B cell (primary cell): ENCODE measurements at regions of chr16 and their contacts with region 1.

Region 1: GRCh38 chr16:29926005-29926710 is at the start of gene KCTD13:
- DNase-seq: peak; percentile 94
- ATAC-seq: peak; percentile 91
- H3K4me3 ChIP-seq: peak within 1 kb of the TSS; percentile 48 to 95 (median 84)
- H3K4me3 Mint-ChIP-seq: peak within 1 kb of the TSS; percentile 91
- H3K27ac ChIP-seq: peak within 1 kb of the TSS; percentile 80 to 84
- H3K27ac Mint-ChIP-seq: peak within 1 kb of the TSS; percentile 96
- H3K4me1 ChIP-seq: peaks cover 14 to 21% of the 10 kb centered on the region in 2 donors
- H3K4me1 Mint-ChIP-seq: peaks cover 25% of the 10 kb centered on the region
- H3K27me3 ChIP-seq: no peaks in the 10 kb centered on the region
- H3K27me3 Mint-ChIP-seq: no peaks in the 10 kb centered on the region
- CTCF ChIP-seq: no peak
- total RNA-seq, gene KCTD13: 74.3 and 83.9 TPM in 2 replicates

Region 2: GRCh38 chr16:29805378-29806098 is 120.6 kb before region 1 on chr16:
- CTCF ChIA-PET with region 1: no interaction called
- POLR2A ChIA-PET with region 1: interaction called, 7 read pairs
- intact Hi-C with region 1: loop called (anchors 2 kb)
- DNase-seq: peak; percentile 99
- ATAC-seq: peak; percentile 69
- H3K4me3 ChIP-seq: peak overlapping the region; percentile 63 to 95 (median 89)
- H3K4me3 Mint-ChIP-seq: peak overlapping the region; percentile 98
- H3K27ac ChIP-seq: peak overlapping the region; percentile 87 to 91
- H3K27ac Mint-ChIP-seq: peak overlapping the region; percentile 100
- H3K4me1 ChIP-seq: peaks cover 43 to 48% of the 10 kb centered on the region in 2 donors
- H3K4me1 Mint-ChIP-seq: peaks cover 44% of the 10 kb centered on the region
- H3K27me3 ChIP-seq: no peaks in the 10 kb centered on the region
- H3K27me3 Mint-ChIP-seq: no peaks in the 10 kb centered on the region
- CTCF ChIP-seq: peak; percentile 13

Region 3: GRCh38 chr16:29961479-29962343 is 35.6 kb after region 1 on chr16 and contains the start of gene TMEM219:
- CTCF ChIA-PET with region 1: interaction called, 9 read pairs
- POLR2A ChIA-PET with region 1: interaction called, 11 read pairs
- intact Hi-C with region 1: loop called (anchors 1 kb)
- DNase-seq: peak; percentile 97
- ATAC-seq: peak; percentile 92
- H3K4me3 ChIP-seq: peak within 1 kb of the TSS; percentile 76 to 86 (median 84)
- H3K4me3 Mint-ChIP-seq: peak within 1 kb of the TSS; percentile 90
- H3K27ac ChIP-seq: peak within 1 kb of the TSS; percentile 79 to 88
- H3K27ac Mint-ChIP-seq: peak within 1 kb of the TSS; percentile 91
- H3K4me1 ChIP-seq: peaks cover 13 to 19% of the 10 kb centered on the region in 2 donors
- H3K4me1 Mint-ChIP-seq: peaks cover 20% of the 10 kb centered on the region
- H3K27me3 ChIP-seq: no peaks in the 10 kb centered on the region
- H3K27me3 Mint-ChIP-seq: no peaks in the 10 kb centered on the region
- CTCF ChIP-seq: peak; percentile 65
- total RNA-seq, gene TMEM219: 56.3 and 66.6 TPM in 2 replicates

Region 4: GRCh38 chr16:29995911-29996772 is 70.0 kb after region 1 on chr16 and contains the start of gene INO80E:
- CTCF ChIA-PET with region 1: no interaction called
- POLR2A ChIA-PET with region 1: no interaction called
- intact Hi-C with region 1: loop called (anchors 1 kb)
- DNase-seq: peak; percentile 97
- ATAC-seq: peak; percentile 96
- H3K4me3 ChIP-seq: peak within 1 kb of the TSS; percentile 89 to 100 (median 98)
- H3K4me3 Mint-ChIP-seq: peak within 1 kb of the TSS; percentile 98
- H3K27ac ChIP-seq: peak within 1 kb of the TSS; percentile 94 to 97
- H3K27ac Mint-ChIP-seq: peak within 1 kb of the TSS; percentile 94
- H3K4me1 ChIP-seq: peaks cover 15 to 22% of the 10 kb centered on the region in 2 donors
- H3K4me1 Mint-ChIP-seq: peaks cover 43% of the 10 kb centered on the region
- H3K27me3 ChIP-seq: no peaks in the 10 kb centered on the region
- H3K27me3 Mint-ChIP-seq: no peaks in the 10 kb centered on the region
- CTCF ChIP-seq: no peak
- total RNA-seq, gene INO80E: 113 and 119 TPM in 2 replicates

Region 5: DNA sequence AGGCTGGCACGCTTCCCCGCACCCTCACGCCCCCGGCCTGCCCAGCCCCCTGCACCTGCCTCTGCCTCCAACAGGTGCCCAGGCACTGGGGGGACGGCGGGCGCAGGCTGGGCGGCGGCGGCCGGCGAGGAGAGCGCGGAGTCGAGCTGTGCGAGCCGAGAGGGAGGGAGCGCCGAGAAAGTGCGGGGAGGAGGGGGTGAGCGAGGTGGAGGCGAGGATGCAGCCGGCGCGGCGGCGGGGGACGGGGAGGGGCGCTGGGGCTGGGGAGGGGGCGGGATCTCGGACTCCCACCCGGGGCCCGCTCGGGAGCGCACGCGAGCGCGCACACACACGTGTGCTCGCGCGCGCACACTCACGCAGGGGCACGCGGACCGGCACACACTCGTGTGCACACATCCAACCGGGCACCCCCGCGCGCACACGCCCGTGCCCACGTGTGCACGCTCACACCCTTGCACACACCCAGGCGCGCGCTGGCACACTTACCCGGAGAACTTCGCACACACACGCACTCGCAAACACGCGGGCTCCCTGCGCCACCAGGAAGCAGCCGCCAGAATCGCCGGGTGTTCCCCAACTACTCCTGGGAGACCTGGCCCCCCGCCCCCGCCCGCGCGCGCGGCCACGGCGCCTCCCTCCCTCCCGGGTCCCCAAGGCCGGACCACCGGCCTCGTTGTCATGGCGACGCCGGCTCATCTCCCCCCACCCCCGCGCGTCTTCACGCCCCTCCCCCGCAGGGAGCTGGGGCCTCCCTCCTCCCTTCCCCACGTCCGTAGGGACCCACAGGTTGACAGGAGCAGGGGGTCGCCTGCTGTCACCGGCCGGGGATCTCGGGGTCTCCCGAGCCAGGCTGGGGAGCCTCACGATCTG is 84.9 kb after region 1 on chr16 and contains the start of gene DOC2A:
- CTCF ChIA-PET with region 1: no interaction called
- POLR2A ChIA-PET with region 1: interaction called, 11 read pairs
- intact Hi-C with region 1: no loop called
- DNase-seq: peak; percentile 49
- ATAC-seq: peak; percentile 32
- H3K4me3 ChIP-seq: peak within 1 kb of the TSS in 4 of 5 experiments; percentile 29 to 50 (median 44)
- H3K4me3 Mint-ChIP-seq: peak within 1 kb of the TSS; percentile 86
- H3K27ac ChIP-seq: no peak within 1 kb of the TSS
- H3K27ac Mint-ChIP-seq: no peak within 1 kb of the TSS
- H3K4me1 ChIP-seq: peaks cover 16 to 21% of the 10 kb centered on the region in 2 donors
- H3K4me1 Mint-ChIP-seq: peaks cover 14% of the 10 kb centered on the region
- H3K27me3 ChIP-seq: peaks cover 0 to 29% (median 15%) of the 10 kb centered on the region in 4 experiments
- H3K27me3 Mint-ChIP-seq: peaks cover 20% of the 10 kb centered on the region
- CTCF ChIP-seq: no peak
- total RNA-seq, gene DOC2A: not detected in 2 replicates

Region 6: DNA sequence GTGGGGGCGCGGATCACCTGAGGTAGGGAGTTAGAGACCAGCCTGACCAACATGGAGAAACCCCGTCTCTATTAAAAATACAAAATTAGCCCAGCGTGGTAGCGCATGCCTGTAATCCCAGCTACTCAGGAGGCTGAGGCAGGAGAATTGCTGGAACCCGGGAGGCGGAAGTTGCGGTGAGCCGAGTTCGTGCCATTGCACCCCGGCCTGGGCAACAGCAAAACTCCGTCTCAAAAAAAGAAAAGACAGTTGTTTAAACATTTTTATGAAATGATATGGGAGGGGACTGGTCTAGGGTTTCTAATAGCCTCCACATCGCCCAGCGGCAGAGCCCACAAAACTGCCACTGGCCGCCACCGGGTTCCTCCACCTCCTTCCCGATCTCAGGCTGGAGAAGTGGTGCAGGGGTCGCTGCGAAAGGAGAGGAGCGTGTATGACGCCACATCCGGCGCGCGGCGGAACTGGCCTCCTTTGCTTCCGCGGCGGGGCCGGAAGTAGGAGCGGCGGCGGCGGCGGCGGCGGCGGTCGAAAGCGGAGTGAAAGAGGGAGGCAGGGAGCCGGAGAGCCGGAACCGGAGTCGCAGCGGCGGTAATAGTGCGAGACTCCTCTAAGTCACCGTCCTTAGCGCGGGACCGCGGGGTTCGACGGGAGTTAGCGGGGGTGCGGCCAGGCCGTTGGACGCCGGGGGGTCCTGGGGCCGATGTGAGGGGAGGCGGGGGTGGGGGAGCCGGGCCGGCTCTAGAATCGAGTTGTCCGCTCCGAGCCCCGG is 149.5 kb after region 1 on chr16 and contains the start of gene PPP4C:
- CTCF ChIA-PET with region 1: no interaction called
- POLR2A ChIA-PET with region 1: no interaction called
- intact Hi-C with region 1: no loop called
- DNase-seq: peak; percentile 93
- ATAC-seq: peak; percentile 89
- H3K4me3 ChIP-seq: peak within 1 kb of the TSS; percentile 65 to 98 (median 90)
- H3K4me3 Mint-ChIP-seq: peak within 1 kb of the TSS; percentile 98
- H3K27ac ChIP-seq: peak within 1 kb of the TSS; percentile 67 to 90
- H3K27ac Mint-ChIP-seq: peak within 1 kb of the TSS; percentile 98
- H3K4me1 ChIP-seq: peaks cover 14 to 25% of the 10 kb centered on the region in 2 donors
- H3K4me1 Mint-ChIP-seq: peaks cover 31% of the 10 kb centered on the region
- H3K27me3 ChIP-seq: no peaks in the 10 kb centered on the region
- H3K27me3 Mint-ChIP-seq: no peaks in the 10 kb centered on the region
- CTCF ChIP-seq: no peak
- total RNA-seq, gene PPP4C: 89.0 and 93.3 TPM in 2 replicates